Activated CD4-positive, alpha-beta memory T cell treated with anti-CD3 and anti-CD28 coated beads, Interleukin-2, amount 10 ng/mL, durations not matched to agents 7 days and 5 days (primary cell): ENCODE measurements at regions of chr12 and their contacts with region 1.

Region 1: GRCh38 chr12:107014028-107014427 is 27.1 kb upstream of the MTERF2 start:
- DNase-seq: no peak
- H3K4me3 Mint-ChIP-seq: no peak overlapping the region
- H3K27ac Mint-ChIP-seq: no peak overlapping the region
- H3K4me1 Mint-ChIP-seq: no peaks in the 10 kb centered on the region
- H3K27me3 Mint-ChIP-seq: no peaks in the 10 kb centered on the region

Region 2: GRCh38 chr12:106919910-106920544 is 94.0 kb before region 1 on chr12:
- CTCF ChIA-PET with region 1: no interaction called
- POLR2A ChIA-PET with region 1: no interaction called
- DNase-seq: no peak
- H3K4me3 Mint-ChIP-seq: no peak overlapping the region
- H3K27ac Mint-ChIP-seq: no peak overlapping the region
- H3K4me1 Mint-ChIP-seq: peaks cover 9% of the 10 kb centered on the region
- H3K27me3 Mint-ChIP-seq: peaks cover 19% of the 10 kb centered on the region

Region 3: GRCh38 chr12:106945261-106945851 is 68.7 kb before region 1 on chr12:
- CTCF ChIA-PET with region 1: no interaction called
- POLR2A ChIA-PET with region 1: no interaction called
- DNase-seq: no peak
- H3K4me3 Mint-ChIP-seq: no peak overlapping the region
- H3K27ac Mint-ChIP-seq: no peak overlapping the region
- H3K4me1 Mint-ChIP-seq: no peaks in the 10 kb centered on the region
- H3K27me3 Mint-ChIP-seq: peaks cover 11% of the 10 kb centered on the region

Region 4: GRCh38 chr12:107105410-107105703 is 91.3 kb after region 1 on chr12:
- CTCF ChIA-PET with region 1: interaction called, 10 read pairs
- POLR2A ChIA-PET with region 1: no interaction called
- DNase-seq: no peak
- H3K4me3 Mint-ChIP-seq: no peak overlapping the region
- H3K27ac Mint-ChIP-seq: no peak overlapping the region
- H3K4me1 Mint-ChIP-seq: peaks cover 15% of the 10 kb centered on the region
- H3K27me3 Mint-ChIP-seq: peaks cover 4% of the 10 kb centered on the region